GM23248 (cell line): ENCODE measurements at regions of chr1 and their contacts with region 1.

Region 1: GRCh38 chr1:94335950-94336349 is 82.2 kb upstream of the ABCD3 start:
- DNase-seq: peak; percentile 94
- H3K4me3 ChIP-seq: no peak overlapping the region
- H3K27ac ChIP-seq: no peak overlapping the region
- H3K4me1 ChIP-seq: peaks cover 34% of the 10 kb centered on the region
- H3K27me3 ChIP-seq: no peaks in the 10 kb centered on the region

Region 2: GRCh38 chr1:93878889-93879586 is 456.9 kb before region 1 on chr1 and contains the start of gene DNTTIP2:
- in situ Hi-C with region 1: loop called (anchors 25 kb)
- DNase-seq: peak; percentile 97
- H3K4me3 ChIP-seq: peak within 1 kb of the TSS; percentile 93
- H3K27ac ChIP-seq: peak within 1 kb of the TSS; percentile 85
- H3K4me1 ChIP-seq: peaks cover 27% of the 10 kb centered on the region
- H3K27me3 ChIP-seq: no peaks in the 10 kb centered on the region
- total RNA-seq, gene DNTTIP2: 31.1 and 35.8 TPM in 2 replicates

Region 3: DNA sequence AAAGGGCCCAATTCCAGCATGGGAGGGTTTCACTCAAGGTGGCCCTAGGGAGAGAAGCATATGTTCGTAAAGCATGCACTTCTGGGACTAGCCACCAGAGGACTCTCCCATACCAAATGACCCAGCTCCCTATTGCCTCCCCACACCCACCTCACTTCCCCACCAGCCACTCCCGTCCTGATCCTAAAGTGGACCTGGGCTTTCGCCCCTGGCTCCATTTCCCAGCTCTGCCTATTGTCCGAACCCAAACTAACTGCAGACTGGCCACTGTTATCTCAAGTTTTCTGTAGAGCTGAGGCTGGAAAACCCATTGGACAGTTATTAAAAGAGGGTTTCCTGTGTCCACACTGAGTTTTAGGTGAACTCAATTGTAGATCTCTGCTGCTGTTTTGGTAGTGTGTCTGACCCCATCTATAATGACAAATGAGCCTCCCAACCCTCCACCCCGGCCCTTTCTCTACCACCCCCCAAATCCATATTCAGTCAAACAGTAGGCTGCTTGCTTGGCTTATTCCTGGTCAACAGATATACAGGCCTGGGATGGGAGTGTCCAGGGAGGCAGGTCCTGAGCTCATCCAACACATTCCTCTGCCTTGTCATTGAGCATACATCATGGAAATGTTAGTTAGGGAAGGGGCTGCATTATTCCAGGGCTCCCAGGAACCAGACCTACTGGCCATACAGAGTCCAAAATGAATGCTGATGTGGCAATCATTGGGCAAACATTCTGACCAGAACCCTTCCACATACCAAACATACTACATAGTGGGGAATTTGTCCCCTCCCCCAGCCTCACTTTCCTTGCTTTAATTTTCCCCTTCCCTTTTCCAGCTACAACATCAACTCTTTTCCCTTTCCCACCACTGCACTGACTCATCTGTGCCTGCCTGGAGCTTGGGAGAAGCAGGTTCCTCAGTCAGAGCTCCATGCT is 274.2 kb before region 1 on chr1:
- in situ Hi-C with region 1: loop called (anchors 5 kb)
- DNase-seq: peak; percentile 81
- H3K4me3 ChIP-seq: no peak overlapping the region
- H3K27ac ChIP-seq: peak overlapping the region; percentile 71
- H3K4me1 ChIP-seq: peaks cover 27% of the 10 kb centered on the region
- H3K27me3 ChIP-seq: no peaks in the 10 kb centered on the region

Region 4: GRCh38 chr1:95252422-95252821 is 916.5 kb after region 1 on chr1:
- in situ Hi-C with region 1: no loop called
- DNase-seq: no peak
- H3K4me3 ChIP-seq: no peak overlapping the region
- H3K27ac ChIP-seq: no peak overlapping the region
- H3K4me1 ChIP-seq: no peaks in the 10 kb centered on the region
- H3K27me3 ChIP-seq: no peaks in the 10 kb centered on the region